ENCODE measurements at regions of chr5 and their contacts with region 1.

Region 1: DNA sequence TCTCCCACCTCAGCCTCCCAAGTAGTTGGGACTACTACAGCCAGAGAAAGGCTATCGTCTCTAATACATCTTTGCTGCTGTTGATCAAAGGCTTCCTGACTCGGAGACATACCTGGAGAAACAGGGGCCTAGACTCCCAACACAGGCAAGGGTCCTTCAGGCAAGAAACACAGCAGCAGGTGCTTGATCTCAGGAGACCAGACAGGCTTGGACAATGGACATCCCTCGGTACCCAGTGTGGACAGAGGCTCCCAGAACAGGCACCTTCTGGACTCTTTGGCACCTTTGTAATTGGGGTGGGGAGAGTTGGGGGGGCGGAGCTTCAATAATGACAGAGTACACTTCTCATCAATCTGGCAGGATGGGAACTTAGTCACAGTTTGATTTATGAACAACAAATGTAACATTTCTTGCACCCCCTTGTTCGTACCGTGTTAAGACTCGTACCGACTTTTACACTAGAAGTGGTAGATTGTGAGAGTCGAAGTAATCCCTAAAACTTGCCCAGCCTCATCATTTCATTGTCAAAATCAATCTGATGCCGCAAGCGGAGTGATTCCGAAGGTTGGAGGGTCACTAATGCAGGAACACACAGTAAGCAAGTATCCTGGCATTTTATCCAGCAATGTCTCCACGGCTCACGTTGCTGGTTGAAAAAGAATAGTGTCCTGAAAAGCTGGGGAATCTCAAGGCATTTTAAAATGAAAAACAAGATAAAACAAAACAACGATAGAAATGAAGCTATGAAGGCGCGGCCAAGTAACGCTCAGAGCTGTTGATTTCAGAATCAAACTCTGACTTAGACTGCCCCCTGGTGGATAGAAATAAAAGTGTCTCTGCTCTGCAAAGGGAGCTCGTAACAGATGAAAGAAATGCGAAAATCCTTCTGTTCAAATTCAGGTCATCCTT is 46.4 kb upstream of the STK32A start:
- DNase-seq: peak; percentile 46
- H3K4me3 ChIP-seq: no peak overlapping the region
- H3K27ac ChIP-seq: no peak overlapping the region
- H3K4me1 ChIP-seq: no peaks in the 10 kb centered on the region
- H3K27me3 ChIP-seq: peaks cover 0 to 8% of the 10 kb centered on the region in 2 experiments
- CTCF ChIP-seq: peak; percentile 60 to 70
- POLR2A ChIP-seq: no peak

Region 2: DNA sequence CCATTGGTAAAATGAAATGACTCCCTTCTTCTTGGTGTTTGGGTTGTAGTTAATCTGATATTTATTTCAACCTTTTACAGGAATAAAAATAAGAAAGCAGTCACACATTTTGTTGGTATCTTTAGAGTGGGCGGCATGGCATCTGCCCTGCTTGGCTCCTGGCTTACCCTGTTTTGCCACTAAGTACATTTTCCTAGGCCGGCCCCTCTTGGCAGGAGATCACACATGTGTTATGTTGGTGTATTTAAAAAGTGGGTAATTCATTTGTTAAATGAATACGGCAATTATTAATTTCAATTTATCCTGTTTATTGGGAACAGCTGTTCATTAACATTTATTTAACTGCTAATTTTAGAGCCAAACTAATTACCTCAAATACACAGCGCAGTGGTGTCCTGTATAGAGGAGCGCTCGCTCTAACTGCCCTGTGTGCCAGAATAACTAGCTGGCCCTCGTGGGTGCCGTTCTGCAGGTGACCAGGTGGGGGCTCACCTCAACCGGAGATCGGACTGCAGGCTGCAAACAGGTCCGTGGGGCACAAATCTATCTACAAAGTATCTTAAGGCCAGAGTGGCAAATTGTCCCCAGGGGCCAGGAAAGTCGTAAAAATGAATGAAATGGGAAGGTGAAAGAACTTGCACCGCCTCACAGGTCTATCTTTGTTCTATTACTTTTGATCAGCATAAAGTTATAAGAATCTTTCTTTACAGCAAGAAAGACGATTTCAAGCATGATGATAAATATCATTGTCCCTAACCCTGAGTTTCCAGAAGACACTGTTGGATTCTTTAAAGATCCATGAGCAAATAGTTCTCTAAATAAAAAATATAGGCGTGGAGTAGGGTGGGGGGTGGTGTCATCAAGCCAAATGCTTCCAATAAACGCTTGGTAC is 646.2 kb before region 1 on chr5:
- CTCF ChIA-PET with region 1: interaction called, 227 read pairs
- POLR2A ChIA-PET with region 1: no interaction called
- dilution Hi-C with region 1: no loop called
- intact Hi-C with region 1: loop called (anchors 1 kb)
- DNase-seq: peak; percentile 66
- H3K4me3 ChIP-seq: no peak overlapping the region
- H3K27ac ChIP-seq: no peak overlapping the region
- H3K4me1 ChIP-seq: no peaks in the 10 kb centered on the region
- H3K27me3 ChIP-seq: peaks cover 0 to 2% of the 10 kb centered on the region in 2 experiments
- CTCF ChIP-seq: peak; percentile 72 to 81
- POLR2A ChIP-seq: no peak

Region 3: DNA sequence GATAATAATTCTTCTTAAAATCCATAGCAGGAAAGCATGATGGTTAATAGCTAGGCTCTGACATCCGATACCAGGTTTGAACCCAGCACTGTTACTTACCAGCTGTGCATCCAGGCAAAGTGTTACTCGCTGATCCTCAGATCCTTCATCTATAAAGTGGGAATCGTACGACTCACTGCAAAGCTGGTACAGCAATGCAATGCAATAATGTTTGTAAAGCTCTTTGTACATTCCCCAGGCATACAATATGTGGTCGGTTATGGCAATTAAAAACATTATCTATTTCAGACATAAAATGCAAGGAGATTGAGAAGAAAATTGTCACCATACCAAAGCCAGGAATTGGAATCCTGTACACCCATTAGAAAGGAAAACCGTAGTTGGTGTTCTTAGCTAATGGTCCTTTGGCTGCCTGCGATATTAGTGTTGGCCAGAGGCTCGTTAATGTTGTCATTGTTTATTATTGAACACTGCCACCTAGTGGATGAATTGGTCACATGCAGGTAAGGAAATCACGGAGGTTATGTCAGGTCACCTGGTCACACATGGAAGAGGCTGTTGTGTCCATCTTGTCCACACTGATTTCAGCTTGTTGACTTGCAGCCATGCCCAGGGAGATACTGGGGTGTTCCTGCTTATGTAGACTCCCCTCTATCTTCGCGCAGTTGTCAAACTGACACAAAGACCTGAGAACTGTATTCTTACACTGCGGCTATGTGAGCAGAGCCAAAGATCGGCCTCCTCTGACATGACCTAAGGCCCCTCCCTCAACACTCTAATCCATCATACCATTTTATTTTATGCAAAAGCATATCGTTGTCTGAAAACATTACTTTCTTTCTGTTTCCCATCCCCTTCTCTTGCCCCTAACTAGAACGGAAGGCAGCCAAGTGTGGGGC is 222.4 kb before region 1 on chr5:
- CTCF ChIA-PET with region 1: interaction called, 54 read pairs
- POLR2A ChIA-PET with region 1: no interaction called
- dilution Hi-C with region 1: no loop called
- intact Hi-C with region 1: loop called (anchors 5 kb)
- DNase-seq: peak; percentile 74
- H3K4me3 ChIP-seq: no peak overlapping the region
- H3K27ac ChIP-seq: no peak overlapping the region
- H3K4me1 ChIP-seq: no peaks in the 10 kb centered on the region
- H3K27me3 ChIP-seq: no peaks in the 10 kb centered on the region
- CTCF ChIP-seq: peak; percentile 62 to 71
- POLR2A ChIP-seq: no peak

Region 4: GRCh38 chr5:147169399-147169798 is 19.1 kb before region 1 on chr5:
- CTCF ChIA-PET with region 1: interaction called, 29 read pairs
- POLR2A ChIA-PET with region 1: no interaction called
- dilution Hi-C with region 1: no loop called
- intact Hi-C with region 1: no loop called
- DNase-seq: no peak
- H3K4me3 ChIP-seq: no peak overlapping the region
- H3K27ac ChIP-seq: no peak overlapping the region
- H3K4me1 ChIP-seq: no peaks in the 10 kb centered on the region
- H3K27me3 ChIP-seq: no peaks in the 10 kb centered on the region
- CTCF ChIP-seq: no peak
- POLR2A ChIP-seq: no peak

Region 5: GRCh38 chr5:147216552-147217154 is 28.2 kb after region 1 on chr5:
- CTCF ChIA-PET with region 1: interaction called, 24 read pairs
- POLR2A ChIA-PET with region 1: no interaction called
- dilution Hi-C with region 1: no loop called
- intact Hi-C with region 1: no loop called
- DNase-seq: no peak
- H3K4me3 ChIP-seq: no peak overlapping the region
- H3K27ac ChIP-seq: no peak overlapping the region
- H3K4me1 ChIP-seq: no peaks in the 10 kb centered on the region
- H3K27me3 ChIP-seq: peaks cover 2 to 5% of the 10 kb centered on the region in 2 experiments
- CTCF ChIP-seq: no peak
- POLR2A ChIP-seq: no peak

Region 6: GRCh38 chr5:147522435-147522834 is 334.0 kb after region 1 on chr5:
- CTCF ChIA-PET with region 1: no interaction called
- POLR2A ChIA-PET with region 1: no interaction called
- dilution Hi-C with region 1: no loop called
- intact Hi-C with region 1: no loop called
- DNase-seq: peak; percentile 87
- H3K4me3 ChIP-seq: no peak overlapping the region
- H3K27ac ChIP-seq: peak overlapping the region; percentile 11
- H3K4me1 ChIP-seq: peaks cover 19% of the 10 kb centered on the region
- H3K27me3 ChIP-seq: no peaks in the 10 kb centered on the region
- CTCF ChIP-seq: no peak
- POLR2A ChIP-seq: no peak

Region 7: DNA sequence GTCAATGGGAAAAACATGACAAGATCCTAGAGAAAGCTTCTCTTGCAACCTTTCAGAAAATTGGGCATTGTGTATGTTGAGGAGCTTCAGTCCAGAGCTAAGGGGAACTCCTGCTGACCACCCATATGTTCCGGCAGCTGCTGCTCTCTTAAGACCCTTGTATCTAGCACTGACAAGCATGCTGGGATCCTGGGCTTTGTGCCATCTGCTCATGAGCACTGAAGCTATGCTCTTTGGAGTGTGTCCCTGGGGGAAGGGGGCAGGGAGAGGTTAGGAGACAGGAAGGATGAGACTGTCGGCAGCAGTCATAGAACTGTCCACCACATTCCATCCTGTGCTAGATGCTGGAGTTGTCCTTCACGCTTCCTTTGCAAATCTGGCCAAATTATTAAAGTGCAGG is 484.8 kb after region 1 on chr5:
- CTCF ChIA-PET with region 1: no interaction called
- POLR2A ChIA-PET with region 1: no interaction called
- dilution Hi-C with region 1: no loop called
- intact Hi-C with region 1: no loop called
- DNase-seq: no peak
- H3K4me3 ChIP-seq: no peak overlapping the region
- H3K27ac ChIP-seq: no peak overlapping the region
- H3K4me1 ChIP-seq: no peaks in the 10 kb centered on the region
- H3K27me3 ChIP-seq: no peaks in the 10 kb centered on the region
- CTCF ChIP-seq: no peak
- POLR2A ChIP-seq: no peak

Measured in endothelial cell of umbilical vein (primary cell).